Dendritic cell treated with granulocyte-macrophage colony-stimulating factor and Interleukin-4, amounts not matched to agents 40 ng/mL and 50 ng/mL, for 4 days (primary cell): ENCODE measurements at regions of chr11 and their contacts with region 1.

Region 1: DNA sequence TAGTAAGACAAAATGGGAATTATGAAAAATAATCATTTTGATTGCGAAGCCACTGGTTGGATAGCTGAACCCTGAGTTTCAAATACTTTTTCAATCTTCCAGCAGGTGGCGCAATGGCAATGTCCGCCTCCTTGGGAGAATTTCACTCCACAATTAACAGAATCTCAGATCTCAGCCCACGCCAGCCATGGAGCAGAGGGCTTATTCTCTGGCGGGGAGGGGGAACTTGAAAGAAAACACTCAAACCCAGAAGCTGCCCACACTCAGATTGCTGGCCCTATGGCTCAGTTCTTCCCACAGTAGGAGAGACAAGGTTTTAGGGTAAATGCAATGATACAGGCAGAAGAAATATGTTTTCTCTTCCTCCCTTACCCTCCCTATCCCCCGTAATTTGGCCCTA is 38.7 kb upstream of the RCN1 start:
- H3K4me3 Mint-ChIP-seq: no peak overlapping the region
- H3K27ac Mint-ChIP-seq: no peak overlapping the region
- H3K4me1 Mint-ChIP-seq: peaks cover 16% of the 10 kb centered on the region
- H3K27me3 Mint-ChIP-seq: peaks cover 12% of the 10 kb centered on the region

Region 2: DNA sequence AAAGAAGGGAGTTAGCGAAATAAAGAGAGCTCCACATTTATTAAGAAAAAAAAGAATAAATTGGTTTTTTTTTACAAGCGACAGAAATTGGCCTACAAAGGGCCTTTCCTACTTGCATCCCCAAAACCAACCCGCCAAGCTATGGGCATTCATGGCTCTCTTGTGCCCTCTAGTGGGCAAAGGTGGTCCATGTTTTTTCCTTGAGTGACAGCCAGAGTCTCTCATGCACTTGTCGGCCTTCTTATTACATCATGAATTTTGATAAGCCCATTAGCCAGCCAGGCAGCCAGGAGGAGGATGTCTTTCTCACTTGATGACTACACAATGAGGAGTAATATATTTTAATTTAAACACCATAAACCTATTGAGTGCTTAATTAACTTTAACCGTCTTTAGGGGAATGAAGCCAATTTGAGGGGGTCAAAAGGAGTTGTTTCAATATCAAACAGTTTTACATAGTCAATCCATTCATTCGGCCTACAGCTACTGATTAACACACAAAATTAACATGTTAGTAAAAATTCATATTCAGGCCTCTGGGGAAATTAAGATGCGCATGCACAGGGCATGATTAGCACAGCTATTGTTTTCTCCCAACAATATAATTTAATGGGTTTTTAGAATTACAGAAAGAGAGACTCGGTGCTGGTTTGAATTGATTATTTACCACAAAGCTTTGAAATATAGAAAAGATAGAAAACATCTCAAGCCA is 124.2 kb after region 1 on chr11:
- intact Hi-C with region 1: loop called (anchors 1 kb)
- H3K4me3 Mint-ChIP-seq: no peak overlapping the region
- H3K27ac Mint-ChIP-seq: no peak overlapping the region
- H3K4me1 Mint-ChIP-seq: no peaks in the 10 kb centered on the region
- H3K27me3 Mint-ChIP-seq: peaks cover 10% of the 10 kb centered on the region

Region 3: DNA sequence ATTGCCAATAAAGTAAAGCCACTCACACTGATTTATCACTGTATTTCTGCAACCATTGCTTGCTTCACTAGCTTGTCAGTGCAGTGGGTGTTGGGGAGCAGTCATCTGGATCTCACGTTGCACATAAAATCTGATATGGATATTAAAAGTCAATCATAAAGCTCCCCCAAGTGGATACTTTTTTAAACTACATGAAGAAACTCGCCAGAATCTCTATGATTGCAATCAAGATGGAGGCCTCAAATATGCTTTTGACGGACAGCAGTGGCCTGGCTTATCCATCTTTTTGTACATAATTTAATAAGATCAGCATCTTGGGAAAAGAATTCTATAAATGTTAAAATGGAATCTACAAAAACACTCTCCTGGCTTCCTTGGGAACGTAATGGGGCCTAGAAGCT is 245.4 kb after region 1 on chr11:
- intact Hi-C with region 1: loop called (anchors 5 kb)
- H3K4me3 Mint-ChIP-seq: no peak overlapping the region
- H3K27ac Mint-ChIP-seq: no peak overlapping the region
- H3K4me1 Mint-ChIP-seq: no peaks in the 10 kb centered on the region
- H3K27me3 Mint-ChIP-seq: peaks cover 2% of the 10 kb centered on the region